G401 (cell line): ENCODE measurements at regions of chr19 and their contacts with region 1.

Region 1: DNA sequence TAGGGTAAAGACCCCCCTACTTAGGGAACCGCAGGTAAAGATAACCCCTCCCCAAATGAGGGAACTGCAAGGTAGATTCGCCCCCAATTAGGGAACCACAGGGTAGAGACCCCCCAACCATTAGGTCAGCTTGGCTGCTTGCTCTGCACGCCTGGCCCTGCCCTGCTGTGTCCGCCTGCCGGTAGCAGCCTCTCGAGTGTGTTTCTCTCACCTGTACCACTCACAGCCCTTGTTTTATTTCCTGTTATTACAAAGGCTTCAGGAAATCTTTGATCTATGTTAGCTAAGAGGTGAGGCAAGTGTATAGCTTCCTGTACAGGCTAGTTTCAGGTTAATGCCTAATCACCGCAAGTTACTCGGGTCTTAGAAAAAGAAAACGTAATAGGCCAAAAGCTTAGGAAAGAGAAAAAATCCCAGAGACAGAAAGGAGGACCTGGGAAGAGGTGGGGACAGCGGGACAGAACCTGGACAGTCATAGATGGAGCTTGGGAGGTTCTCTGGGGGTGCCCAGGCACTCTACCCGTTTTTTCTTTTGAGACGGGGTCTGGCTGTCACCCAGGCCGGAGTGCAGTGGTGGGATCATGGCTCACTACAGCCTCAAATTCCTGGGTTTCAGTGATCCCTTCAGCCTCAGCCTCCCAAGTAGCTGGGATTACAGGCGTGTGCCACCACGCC is 23.1 kb upstream of the EIF3G start:
- DNase-seq: no peak

Region 2: GRCh38 chr19:10206226-10206885 is 63.5 kb after region 1 on chr19:
- in situ Hi-C with region 1: loop called (anchors 10 kb)
- DNase-seq: no peak